ENCODE measurements at regions of chr10 and their contacts with region 1.

Region 1: DNA sequence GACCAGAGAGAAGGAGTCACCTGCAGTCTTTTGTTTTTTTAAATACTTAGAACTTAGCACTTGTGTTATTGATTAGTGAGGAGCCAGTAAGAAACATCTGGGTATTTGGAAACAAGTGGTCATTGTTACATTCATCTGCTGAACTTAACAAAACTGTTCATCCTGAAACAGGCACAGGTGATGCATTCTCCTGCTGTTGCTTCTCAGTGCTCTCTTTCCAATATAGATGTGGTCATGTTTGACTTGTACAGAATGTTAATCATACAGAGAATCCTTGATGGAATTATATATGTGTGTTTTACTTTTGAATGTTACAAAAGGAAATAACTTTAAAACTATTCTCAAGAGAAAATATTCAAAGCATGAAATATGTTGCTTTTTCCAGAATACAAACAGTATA is 13.5 kb downstream of the GHITM start:
- DNase-seq: no peak
- H3K4me3 ChIP-seq: no peak overlapping the region
- H3K4me3 Mint-ChIP-seq: no peak overlapping the region
- H3K27ac ChIP-seq: no peak overlapping the region
- H3K27ac Mint-ChIP-seq: peak overlapping the region in 2 of 8 donors; percentile 32 to 50
- H3K4me1 ChIP-seq: peaks cover 4% of the 10 kb centered on the region
- H3K4me1 Mint-ChIP-seq: peaks cover 13 to 28% (median 16%) of the 10 kb centered on the region in 3 donors
- H3K27me3 ChIP-seq: no peaks in the 10 kb centered on the region
- H3K27me3 Mint-ChIP-seq: no peaks in the 10 kb centered on the region

Region 2: GRCh38 chr10:84177541-84178141 is 24.9 kb after region 1 on chr10:
- CTCF ChIA-PET with region 1: interaction called, 11 read pairs
- POLR2A ChIA-PET with region 1: interaction called, 5 read pairs
- DNase-seq: peak; percentile 53 to 84 (median 59)
- H3K4me3 ChIP-seq: no peak overlapping the region
- H3K4me3 Mint-ChIP-seq: no peak overlapping the region
- H3K27ac ChIP-seq: peak overlapping the region; percentile 5
- H3K27ac Mint-ChIP-seq: no peak overlapping the region
- H3K4me1 ChIP-seq: peaks cover 29% of the 10 kb centered on the region
- H3K4me1 Mint-ChIP-seq: peaks cover 3 to 14% (median 13%) of the 10 kb centered on the region in 3 donors
- H3K27me3 ChIP-seq: no peaks in the 10 kb centered on the region
- H3K27me3 Mint-ChIP-seq: no peaks in the 10 kb centered on the region

Measured in CD8-positive, alpha-beta memory T cell (primary cell).